Activated CD4-positive, alpha-beta T cell treated with anti-CD3 and anti-CD28 coated beads for 36 hours (primary cell): ENCODE measurements at regions of chr7 and their contacts with region 1.

Region 1: DNA sequence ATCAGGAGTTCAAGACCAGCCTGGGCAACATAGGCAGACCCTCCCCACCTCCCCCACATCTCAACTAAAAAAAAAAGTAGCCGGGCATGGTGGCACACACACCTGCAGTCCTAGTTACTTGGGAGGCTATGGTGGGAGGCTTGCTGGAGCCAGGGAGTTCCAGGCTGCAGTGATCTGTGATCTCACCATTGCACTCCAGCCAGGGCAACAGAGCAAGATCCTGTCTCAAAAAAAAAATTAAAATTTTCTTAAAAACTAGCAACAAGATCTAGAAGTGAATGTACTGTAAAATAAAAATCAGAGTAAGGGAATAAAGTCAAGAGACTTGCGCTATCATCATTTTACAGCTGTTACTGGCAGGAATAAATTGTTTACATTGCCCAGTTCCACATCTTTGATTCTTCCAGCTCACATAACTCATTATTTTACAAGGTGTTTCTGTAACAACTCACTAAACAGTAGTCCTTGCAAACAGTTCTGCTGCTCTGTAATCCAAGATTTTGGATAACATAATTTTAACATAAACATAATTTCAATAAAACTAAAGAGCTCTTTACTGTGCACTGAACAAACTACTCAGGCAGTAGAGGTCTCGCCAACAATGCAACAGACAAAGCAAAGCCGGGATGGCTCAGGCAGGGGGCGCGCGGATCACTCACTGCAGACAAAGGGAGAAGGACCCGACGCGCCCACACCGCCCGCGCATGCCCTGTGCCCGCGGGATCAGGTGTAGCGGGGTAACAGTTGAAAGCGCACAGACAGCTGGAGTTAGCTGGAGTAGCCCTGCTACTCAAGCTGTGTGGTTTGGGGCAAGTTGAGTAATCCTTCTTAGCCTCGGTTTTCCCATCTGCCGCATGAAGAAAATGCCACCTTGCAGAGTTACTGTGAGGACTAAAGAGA is 73.3 kb upstream of the NFE2L3 start:
- DNase-seq: peak; percentile 90
- ATAC-seq: peak; percentile 99
- H3K4me3 Mint-ChIP-seq: no peak overlapping the region
- H3K27ac Mint-ChIP-seq: no peak overlapping the region
- H3K4me1 Mint-ChIP-seq: peaks cover 3% of the 10 kb centered on the region
- H3K27me3 Mint-ChIP-seq: peaks cover 13% of the 10 kb centered on the region

Region 2: DNA sequence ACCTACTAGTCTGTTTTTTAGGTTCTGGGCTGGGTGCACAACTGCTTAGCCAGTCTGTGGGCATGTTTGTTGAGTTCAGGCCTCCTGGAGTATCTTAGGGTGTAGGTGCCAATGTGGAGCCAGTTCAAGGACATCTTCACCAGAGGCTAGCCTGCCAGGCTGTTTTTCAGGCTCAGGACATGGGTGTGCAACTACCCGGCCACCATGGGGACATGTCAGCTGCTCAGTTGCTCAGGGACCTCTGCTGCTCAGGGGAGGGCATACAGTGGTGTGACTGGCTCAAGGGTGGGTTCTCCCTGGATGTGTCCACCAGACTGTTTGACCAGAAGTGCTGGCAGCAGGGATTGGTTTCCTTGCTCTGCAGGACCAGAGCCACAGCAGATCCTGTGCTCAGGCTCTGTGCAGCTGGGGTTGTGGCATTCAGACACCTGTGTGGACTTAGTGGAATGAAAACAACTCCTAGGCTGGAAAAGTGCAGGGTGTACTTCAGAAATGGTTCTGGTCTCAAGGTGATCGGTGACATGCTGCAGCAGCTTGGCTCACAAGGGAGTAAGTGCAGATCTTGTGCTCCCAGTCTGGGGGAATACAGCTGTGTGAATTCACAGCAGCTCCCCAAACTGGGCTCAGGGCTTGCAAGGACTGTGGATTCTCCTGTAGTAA is 1460.6 kb before region 1 on chr7:
- CTCF ChIA-PET with region 1: no interaction called
- POLR2A ChIA-PET with region 1: no interaction called
- intact Hi-C with region 1: no loop called
- DNase-seq: no peak
- ATAC-seq: no peak
- H3K4me3 Mint-ChIP-seq: no peak overlapping the region
- H3K27ac Mint-ChIP-seq: no peak overlapping the region
- H3K4me1 Mint-ChIP-seq: peaks cover 11% of the 10 kb centered on the region
- H3K27me3 Mint-ChIP-seq: no peaks in the 10 kb centered on the region

Region 3: DNA sequence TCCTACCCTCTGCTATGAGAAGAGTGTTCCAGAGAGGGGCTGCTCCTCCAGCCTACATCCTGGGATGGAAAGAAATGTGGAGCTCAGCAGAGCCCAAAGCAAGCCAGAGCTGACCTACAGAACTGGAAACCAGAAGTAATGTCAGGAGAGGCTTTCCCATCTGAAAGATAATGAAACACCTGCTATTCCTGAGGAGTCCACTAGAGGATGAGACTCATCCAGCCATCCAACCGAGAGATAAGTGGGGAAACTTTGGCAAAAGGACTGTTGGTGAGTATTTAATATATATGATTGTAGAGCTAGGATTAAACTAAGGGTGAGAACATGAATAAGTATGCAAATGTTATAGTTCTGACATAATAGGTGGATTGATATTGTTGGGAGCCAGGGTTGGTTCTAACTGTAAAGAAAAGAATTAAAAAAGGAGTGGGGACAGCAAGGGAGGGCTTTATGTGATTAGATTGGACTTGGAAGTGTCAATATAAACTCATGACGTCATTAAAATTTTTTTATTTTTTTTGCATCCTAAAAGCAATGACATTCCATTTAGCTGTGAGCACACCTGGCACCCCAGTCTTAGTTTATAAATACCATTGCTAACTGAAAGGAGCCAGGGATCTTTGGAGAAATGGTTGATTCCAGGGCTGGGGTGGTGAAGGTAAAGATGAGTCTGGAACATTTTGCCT is 239.5 kb before region 1 on chr7:
- CTCF ChIA-PET with region 1: no interaction called
- POLR2A ChIA-PET with region 1: no interaction called
- intact Hi-C with region 1: no loop called
- DNase-seq: no peak
- ATAC-seq: no peak
- H3K4me3 Mint-ChIP-seq: no peak overlapping the region
- H3K27ac Mint-ChIP-seq: no peak overlapping the region
- H3K4me1 Mint-ChIP-seq: no peaks in the 10 kb centered on the region
- H3K27me3 Mint-ChIP-seq: peaks cover 27% of the 10 kb centered on the region

Region 4: DNA sequence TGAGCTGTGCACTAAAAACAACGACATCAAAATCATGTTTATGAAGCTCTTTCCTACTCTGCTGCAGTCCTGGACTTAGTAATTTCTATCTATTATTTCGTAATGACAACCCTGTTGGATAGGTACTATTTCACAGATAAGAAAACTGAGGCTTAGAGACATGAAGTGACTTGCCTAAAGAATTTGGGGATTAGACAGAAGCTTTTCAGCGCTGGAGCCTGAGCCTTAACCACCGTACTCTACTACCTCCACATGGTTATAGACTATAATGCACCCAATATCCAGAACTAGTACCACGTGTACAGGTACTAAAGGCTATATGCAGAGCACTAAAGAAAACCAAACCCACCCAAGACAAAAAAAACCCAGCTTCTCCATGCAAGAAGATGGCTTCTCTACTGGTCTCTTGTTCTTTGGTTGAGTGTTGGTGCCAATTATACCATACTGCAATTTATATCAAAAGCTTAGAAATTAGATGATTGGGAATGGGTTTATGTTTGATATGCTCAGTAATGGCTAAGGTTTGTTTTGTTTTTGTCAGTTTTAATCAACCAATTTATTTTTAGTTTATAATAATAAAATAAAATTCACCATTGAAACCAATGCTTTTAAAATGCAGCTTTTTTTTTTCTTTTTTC is 206.4 kb after region 1 on chr7:
- CTCF ChIA-PET with region 1: interaction called, 12 read pairs
- POLR2A ChIA-PET with region 1: no interaction called
- intact Hi-C with region 1: loop called in 1 of 2 experiments (anchors 1 kb)
- DNase-seq: peak; percentile 33
- ATAC-seq: peak; percentile 94
- H3K4me3 Mint-ChIP-seq: no peak overlapping the region
- H3K27ac Mint-ChIP-seq: no peak overlapping the region
- H3K4me1 Mint-ChIP-seq: peaks cover 4% of the 10 kb centered on the region
- H3K27me3 Mint-ChIP-seq: no peaks in the 10 kb centered on the region

Region 5: GRCh38 chr7:26500749-26501352 is 422.2 kb after region 1 on chr7:
- CTCF ChIA-PET with region 1: no interaction called
- POLR2A ChIA-PET with region 1: no interaction called
- intact Hi-C with region 1: loop called in 1 of 2 experiments (anchors 10 kb)
- DNase-seq: no peak
- ATAC-seq: no peak
- H3K4me3 Mint-ChIP-seq: no peak overlapping the region
- H3K27ac Mint-ChIP-seq: no peak overlapping the region
- H3K4me1 Mint-ChIP-seq: no peaks in the 10 kb centered on the region
- H3K27me3 Mint-ChIP-seq: peaks cover 3% of the 10 kb centered on the region